Pancreas (tissue), 10 donors: ENCODE measurements at regions of chr17 and their contacts with region 1.

Region 1: DNA sequence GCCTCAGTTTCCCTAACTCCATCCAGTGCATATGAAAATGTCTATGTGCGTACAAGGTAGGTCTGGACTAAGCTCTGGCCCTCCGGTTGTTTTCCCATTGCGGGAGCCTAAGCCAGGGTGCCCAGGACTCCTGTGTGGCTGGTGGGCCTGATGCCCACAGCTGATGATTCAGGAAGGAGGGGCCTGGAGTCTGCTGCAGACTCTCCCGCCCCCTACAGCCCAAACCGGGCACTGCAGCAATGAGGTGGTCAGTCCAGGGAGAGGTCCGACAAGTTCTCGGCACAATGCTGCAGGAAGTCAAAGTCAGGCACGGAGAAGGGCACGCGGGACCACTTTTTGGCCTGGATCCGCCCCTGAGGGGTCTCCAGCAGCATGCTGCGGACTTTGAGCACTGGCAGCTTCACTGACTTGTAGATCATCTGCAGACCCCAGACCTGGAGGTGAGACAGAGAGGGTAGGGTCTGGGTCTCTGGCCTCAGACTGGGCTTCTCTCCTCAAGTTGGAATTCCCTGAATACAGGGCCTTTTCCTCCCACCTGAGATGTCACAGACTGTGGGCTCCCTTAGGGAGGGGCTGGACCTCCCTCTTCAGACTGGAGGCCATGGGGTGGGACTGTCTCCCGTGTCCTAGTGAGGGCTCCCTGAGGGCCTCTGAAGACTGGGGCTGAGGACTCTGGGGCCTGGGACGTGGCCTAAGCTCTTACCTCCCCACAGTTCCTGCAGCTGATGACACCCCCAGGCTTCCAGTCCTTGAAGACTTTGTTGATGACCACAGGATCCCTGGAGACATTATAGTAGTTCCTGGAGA is 3.4 kb upstream of the ZNF385C start:
- DNase-seq: peak; percentile 54 to 93 (median 82)
- ATAC-seq: peak; percentile 79 to 89 (median 82)
- H3K4me3 ChIP-seq: no peak overlapping the region
- H3K27ac ChIP-seq: no peak overlapping the region
- H3K4me1 ChIP-seq: peaks cover 0 to 4% (median 0%) of the 10 kb centered on the region in 3 donors
- H3K27me3 ChIP-seq: no peaks in the 10 kb centered on the region
- CTCF ChIP-seq: peak; percentile 51 to 74 (median 68)

Region 2: GRCh38 chr17:42039794-42040763 is 61.6 kb before region 1 on chr17:
- intact Hi-C with region 1: no loop called
- DNase-seq: peak in 2 of 6 donors; percentile 54 to 77
- ATAC-seq: no peak
- H3K4me3 ChIP-seq: no peak overlapping the region
- H3K27ac ChIP-seq: no peak overlapping the region
- H3K4me1 ChIP-seq: peaks cover 0 to 4% (median 0%) of the 10 kb centered on the region in 3 donors
- H3K27me3 ChIP-seq: no peaks in the 10 kb centered on the region
- CTCF ChIP-seq: no peak

Region 3: DNA sequence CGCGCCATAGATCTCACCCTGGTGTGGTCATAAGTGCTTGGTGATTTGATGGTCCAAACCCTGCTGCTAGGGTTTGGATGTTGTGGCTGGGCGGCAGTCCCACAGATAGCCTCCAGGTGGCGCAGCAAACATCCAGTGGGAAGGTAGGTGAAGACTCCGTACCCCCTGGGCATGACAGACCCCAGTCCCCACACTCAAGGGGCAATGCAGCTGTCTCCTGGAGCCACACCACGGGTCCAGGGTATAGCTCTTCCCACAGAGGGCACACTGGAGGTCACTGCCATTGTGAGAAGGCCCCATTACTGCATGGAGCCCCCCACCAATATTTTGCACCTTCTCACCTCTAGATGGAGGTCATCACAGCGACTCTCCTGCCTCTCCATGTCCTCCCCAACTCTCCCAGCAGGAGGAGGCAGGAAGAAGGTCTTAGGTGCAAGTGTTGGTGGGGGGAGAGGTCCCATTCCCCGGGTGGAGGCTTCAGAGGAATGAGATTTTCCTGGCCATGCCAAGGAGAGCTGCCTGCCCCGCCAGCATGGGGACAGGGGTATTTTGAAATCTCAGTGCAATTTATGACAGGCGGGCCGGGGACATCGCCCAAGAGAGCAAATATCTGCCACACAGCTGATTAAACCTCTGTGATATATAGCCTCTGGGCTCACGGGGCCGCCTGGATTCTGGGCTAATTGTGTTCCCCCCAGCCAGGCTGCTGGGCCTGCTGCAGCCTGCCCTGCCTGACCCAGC is 34.2 kb before region 1 on chr17:
- intact Hi-C with region 1: loop called in 1 of 3 experiments (anchors 5 kb)
- DNase-seq: peak in 5 of 6 donors; percentile 32 to 91 (median 76)
- ATAC-seq: peak; percentile 62 to 87 (median 82)
- H3K4me3 ChIP-seq: no peak overlapping the region
- H3K27ac ChIP-seq: no peak overlapping the region
- H3K4me1 ChIP-seq: peaks cover 0 to 2% (median 0%) of the 10 kb centered on the region in 3 donors
- H3K27me3 ChIP-seq: no peaks in the 10 kb centered on the region
- CTCF ChIP-seq: peak; percentile 84 to 90 (median 90)